Endothelial cell of umbilical vein (primary cell): ENCODE measurements at regions of chr1 and their contacts with region 1.

Region 1: DNA sequence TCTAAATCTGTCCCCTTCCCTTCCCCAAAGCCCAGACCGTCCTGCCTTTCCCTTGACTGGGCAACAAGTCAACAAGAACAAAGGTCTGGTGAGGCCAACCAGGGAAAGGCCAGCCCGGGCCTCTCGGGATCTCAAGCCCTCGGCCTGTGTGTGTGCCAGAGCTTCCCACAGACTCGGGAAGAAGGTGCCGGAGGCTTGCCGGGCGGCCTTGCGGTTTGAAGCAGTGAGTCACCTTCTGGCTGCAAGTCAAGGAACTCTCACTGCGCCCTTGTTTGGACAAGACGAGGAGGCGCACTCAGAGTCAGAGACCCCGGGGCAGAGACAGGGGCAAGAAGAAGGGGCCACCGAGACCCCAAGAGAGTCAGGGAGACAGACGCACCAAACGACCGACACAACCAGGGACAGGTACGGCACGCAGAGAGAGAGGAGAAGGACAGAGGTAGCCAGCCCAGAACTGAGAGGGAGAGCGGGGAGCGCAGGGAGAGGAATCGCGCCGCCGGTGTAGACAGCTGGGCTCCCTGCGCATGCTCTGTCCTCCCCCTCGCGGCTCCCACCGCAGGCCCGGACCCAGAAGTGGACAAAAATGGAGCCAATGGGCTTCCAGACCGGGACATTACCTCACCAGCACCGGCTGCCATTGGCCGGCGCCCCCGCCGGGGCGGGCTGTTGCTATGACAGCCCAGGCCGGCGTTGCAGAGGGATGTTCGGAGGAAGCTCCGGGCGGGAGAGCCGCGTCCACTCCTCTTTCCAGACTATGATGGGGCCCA is 66.6 kb upstream of the LAPTM5 start:
- DNase-seq: peak; percentile 98
- H3K4me3 ChIP-seq: peak overlapping the region in 2 of 3 experiments; percentile 39 to 40
- H3K27ac ChIP-seq: peak overlapping the region; percentile 80
- H3K4me1 ChIP-seq: peaks cover 10% of the 10 kb centered on the region
- H3K27me3 ChIP-seq: peaks cover 27% of the 10 kb centered on the region in 2 experiments
- CTCF ChIP-seq: no peak
- POLR2A ChIP-seq: peak; percentile 73

Region 2: DNA sequence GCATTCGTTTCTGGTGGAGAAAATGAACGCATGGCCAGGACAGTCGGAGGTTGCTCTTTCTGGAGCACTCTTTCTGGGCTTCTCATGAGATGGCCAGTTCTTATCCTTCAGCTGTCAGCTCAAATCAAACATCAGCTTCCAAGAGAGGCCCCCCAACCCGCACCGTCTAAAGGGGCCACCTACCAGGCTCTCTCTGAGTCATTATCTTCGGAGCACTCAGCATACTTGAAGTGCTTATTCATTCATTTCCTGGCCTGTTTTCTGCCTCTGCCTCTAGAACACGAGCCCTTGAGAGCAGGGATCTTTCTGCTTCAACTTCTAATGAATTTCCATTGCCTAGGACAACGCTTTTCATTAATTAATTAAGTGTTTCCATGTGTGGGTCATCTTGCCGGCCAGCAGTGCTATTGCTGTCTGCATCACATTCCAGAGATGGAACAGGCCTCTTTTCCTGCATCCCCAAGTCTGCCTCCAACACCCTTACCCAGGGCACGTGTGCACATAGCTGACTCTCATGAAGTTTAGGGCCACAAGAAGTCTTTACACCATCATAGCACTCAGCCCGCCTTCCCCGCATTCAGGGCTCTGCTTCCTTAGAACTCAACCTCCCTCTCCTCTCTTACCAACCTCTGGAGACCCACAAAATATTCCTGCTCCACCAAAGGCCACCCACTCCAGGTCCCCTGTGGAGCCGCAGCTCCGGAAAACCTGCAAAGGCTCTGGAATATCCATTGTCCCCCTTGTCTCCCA is 14.5 kb before region 1 on chr1:
- CTCF ChIA-PET with region 1: interaction called, 8 read pairs
- POLR2A ChIA-PET with region 1: no interaction called
- dilution Hi-C with region 1: no loop called
- intact Hi-C with region 1: loop called (anchors 1 kb)
- DNase-seq: peak; percentile 52
- H3K4me3 ChIP-seq: no peak overlapping the region
- H3K27ac ChIP-seq: no peak overlapping the region
- H3K4me1 ChIP-seq: peaks cover 10% of the 10 kb centered on the region
- H3K27me3 ChIP-seq: peaks cover 11 to 17% of the 10 kb centered on the region in 2 experiments
- CTCF ChIP-seq: no peak
- POLR2A ChIP-seq: no peak

Region 3: GRCh38 chr1:30840904-30841598 is 16.9 kb after region 1 on chr1:
- CTCF ChIA-PET with region 1: interaction called, 10 read pairs
- POLR2A ChIA-PET with region 1: interaction called, 15 read pairs
- dilution Hi-C with region 1: no loop called
- intact Hi-C with region 1: loop called (anchors 1 kb)
- DNase-seq: peak; percentile 95
- H3K4me3 ChIP-seq: no peak overlapping the region
- H3K27ac ChIP-seq: no peak overlapping the region
- H3K4me1 ChIP-seq: peaks cover 12% of the 10 kb centered on the region
- H3K27me3 ChIP-seq: peaks cover 68% of the 10 kb centered on the region in 2 experiments
- CTCF ChIP-seq: no peak
- POLR2A ChIP-seq: no peak